Mammary epithelial cell (primary cell): ENCODE measurements at regions of chr7 and their contacts with region 1.

Region 1: GRCh38 chr7:114865564-114865963 is 56.3 kb upstream of the MDFIC start:
- DNase-seq: peak; percentile 36
- H3K4me3 ChIP-seq: no peak overlapping the region
- H3K27ac ChIP-seq: no peak overlapping the region
- H3K4me1 ChIP-seq: no peaks in the 10 kb centered on the region
- H3K27me3 ChIP-seq: no peaks in the 10 kb centered on the region
- CTCF ChIP-seq: peak; percentile 67 to 91

Region 2: DNA sequence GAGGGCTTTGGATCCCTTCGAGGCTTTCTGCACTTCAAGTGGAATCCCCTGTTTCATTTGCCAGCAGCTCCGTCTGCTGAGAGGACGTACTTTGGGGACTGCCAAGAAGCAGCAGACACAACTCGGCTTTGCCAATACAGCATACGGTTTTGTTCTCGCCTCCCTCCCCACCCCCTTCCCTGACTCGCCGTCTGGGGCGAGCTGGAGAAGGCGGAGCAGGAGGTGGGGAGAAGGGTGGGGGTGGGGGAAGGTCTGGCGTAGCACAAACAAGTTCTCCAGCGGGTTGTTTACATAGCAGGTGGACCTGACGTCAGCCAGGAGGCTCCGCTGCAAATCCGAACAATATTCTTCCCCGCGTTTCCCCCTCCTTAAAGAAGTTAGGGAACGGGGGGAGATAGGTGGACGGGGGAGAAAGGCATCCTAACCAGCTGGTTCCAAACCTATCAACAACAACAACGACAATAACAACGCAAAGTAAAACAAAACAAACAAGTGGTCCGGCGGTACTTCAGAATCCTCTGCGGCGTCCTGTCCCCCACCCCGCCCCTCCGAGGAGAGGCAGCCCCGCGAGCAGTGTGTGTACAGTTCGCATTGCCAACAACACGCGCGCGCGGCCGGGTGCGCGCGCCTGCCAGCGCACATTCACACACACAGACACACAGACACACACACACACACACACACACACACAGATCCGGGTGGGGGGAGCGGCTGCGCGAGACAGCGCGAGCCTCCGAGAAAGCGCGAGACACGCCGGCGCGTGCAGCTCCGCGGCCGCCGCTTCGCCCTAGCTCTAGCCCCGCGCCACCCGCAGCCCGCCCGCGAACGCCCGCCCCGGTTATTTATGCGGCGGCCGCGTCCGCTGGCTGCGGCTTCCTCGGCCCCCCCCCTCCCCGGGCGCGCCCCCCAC is 779.7 kb before region 1 on chr7:
- CTCF ChIA-PET with region 1: no interaction called
- dilution Hi-C with region 1: no loop called
- in situ Hi-C with region 1: no loop called
- intact Hi-C with region 1: loop called (anchors 5 kb)
- DNase-seq: peak; percentile 16
- H3K4me3 ChIP-seq: peak overlapping the region; percentile 1 to 38 (median 38)
- H3K27ac ChIP-seq: no peak overlapping the region
- H3K4me1 ChIP-seq: peaks cover 13% of the 10 kb centered on the region
- H3K27me3 ChIP-seq: peaks cover 60% of the 10 kb centered on the region
- CTCF ChIP-seq: no peak

Region 3: GRCh38 chr7:114293289-114294012 is 572.1 kb before region 1 on chr7:
- CTCF ChIA-PET with region 1: no interaction called
- dilution Hi-C with region 1: no loop called
- in situ Hi-C with region 1: no loop called
- intact Hi-C with region 1: no loop called
- DNase-seq: no peak
- H3K4me3 ChIP-seq: no peak overlapping the region
- H3K27ac ChIP-seq: no peak overlapping the region
- H3K4me1 ChIP-seq: peaks cover 10% of the 10 kb centered on the region
- H3K27me3 ChIP-seq: no peaks in the 10 kb centered on the region
- CTCF ChIP-seq: no peak

Region 4: DNA sequence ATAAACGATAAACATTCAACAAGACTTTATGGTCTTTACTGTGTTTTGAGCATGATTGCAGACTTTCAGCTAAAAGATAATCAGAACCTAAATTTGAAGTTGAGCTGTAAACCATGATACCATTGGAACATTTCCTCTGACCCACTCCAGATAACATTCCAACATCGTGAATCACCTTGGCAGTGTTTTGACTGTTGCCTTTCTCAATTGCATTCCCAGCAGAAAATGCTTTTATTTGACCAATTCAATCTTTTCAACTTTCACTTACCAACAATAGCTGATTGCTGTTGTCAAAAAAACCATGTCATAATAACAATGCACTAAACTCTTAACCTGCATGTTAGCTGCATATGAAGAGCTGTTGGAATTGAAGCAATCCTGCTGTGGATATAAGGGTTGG is 221.9 kb after region 1 on chr7:
- CTCF ChIA-PET with region 1: no interaction called
- dilution Hi-C with region 1: no loop called
- in situ Hi-C with region 1: no loop called
- intact Hi-C with region 1: loop called (anchors 5 kb)
- DNase-seq: peak; percentile 50
- H3K4me3 ChIP-seq: no peak overlapping the region
- H3K27ac ChIP-seq: no peak overlapping the region
- H3K4me1 ChIP-seq: peaks cover 9% of the 10 kb centered on the region
- H3K27me3 ChIP-seq: no peaks in the 10 kb centered on the region
- CTCF ChIP-seq: no peak

Region 5: GRCh38 chr7:115297656-115298055 is 432.1 kb after region 1 on chr7:
- CTCF ChIA-PET with region 1: no interaction called
- dilution Hi-C with region 1: no loop called
- in situ Hi-C with region 1: no loop called
- intact Hi-C with region 1: loop called (anchors 5 kb)
- DNase-seq: peak; percentile 75
- H3K4me3 ChIP-seq: no peak overlapping the region
- H3K27ac ChIP-seq: no peak overlapping the region
- H3K4me1 ChIP-seq: no peaks in the 10 kb centered on the region
- H3K27me3 ChIP-seq: no peaks in the 10 kb centered on the region
- CTCF ChIP-seq: peak in 1 of 2 donors; percentile 27

Region 6: DNA sequence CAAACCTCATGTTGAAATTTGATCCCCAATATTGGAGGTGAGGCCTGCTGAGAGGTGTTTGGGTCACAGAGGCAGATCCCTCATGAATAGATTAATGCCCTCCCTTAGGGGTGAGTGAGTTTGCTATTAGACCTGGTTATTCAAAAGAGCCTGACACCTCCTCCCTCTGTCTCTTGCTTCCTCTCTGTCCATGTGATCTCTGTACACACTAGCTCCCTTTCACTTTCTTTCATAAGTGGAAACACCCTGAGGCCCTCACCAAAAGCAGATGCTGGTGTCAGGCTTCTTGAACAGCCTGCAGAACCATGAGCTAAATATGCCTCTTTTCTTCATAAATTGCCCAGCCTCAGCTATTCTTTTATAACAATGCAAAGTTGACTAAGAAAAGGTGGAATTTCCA is 503.4 kb after region 1 on chr7:
- CTCF ChIA-PET with region 1: no interaction called
- dilution Hi-C with region 1: no loop called
- in situ Hi-C with region 1: no loop called
- intact Hi-C with region 1: loop called (anchors 5 kb)
- DNase-seq: no peak
- H3K4me3 ChIP-seq: no peak overlapping the region
- H3K27ac ChIP-seq: no peak overlapping the region
- H3K4me1 ChIP-seq: no peaks in the 10 kb centered on the region
- H3K27me3 ChIP-seq: no peaks in the 10 kb centered on the region
- CTCF ChIP-seq: no peak

Region 7: GRCh38 chr7:115748131-115748738 is 882.7 kb after region 1 on chr7:
- CTCF ChIA-PET with region 1: no interaction called
- dilution Hi-C with region 1: no loop called
- in situ Hi-C with region 1: no loop called
- intact Hi-C with region 1: loop called (anchors 10 kb)
- DNase-seq: no peak
- H3K4me3 ChIP-seq: no peak overlapping the region
- H3K27ac ChIP-seq: no peak overlapping the region
- H3K4me1 ChIP-seq: no peaks in the 10 kb centered on the region
- H3K27me3 ChIP-seq: no peaks in the 10 kb centered on the region
- CTCF ChIP-seq: peak in 1 of 2 donors; percentile 52